ENCODE measurements at regions of chr15 and their contacts with region 1.

Region 1: GRCh38 chr15:31326156-31326732 is 391 bp upstream of the KLF13 start:
- DNase-seq: peak; percentile 99 to 100
- ATAC-seq: peak; percentile 88 to 95 (median 92)
- H3K4me3 ChIP-seq: peak overlapping the region; percentile 71 to 96 (median 92)
- H3K27ac ChIP-seq: peak overlapping the region; percentile 99 to 100 (median 100)
- H3K4me1 ChIP-seq: peaks cover 14 to 53% (median 38%) of the 10 kb centered on the region in 9 donors
- H3K27me3 ChIP-seq: no peaks in the 10 kb centered on the region
- CTCF ChIP-seq: no peak

Region 2: GRCh38 chr15:31200735-31201151 is 125.5 kb before region 1 on chr15:
- intact Hi-C with region 1: loop called in 2 of 10 experiments (anchors 5 kb)
- DNase-seq: peak; percentile 75 to 83
- ATAC-seq: peak; percentile 89 to 97 (median 92)
- H3K4me3 ChIP-seq: no peak overlapping the region
- H3K27ac ChIP-seq: no peak overlapping the region
- H3K4me1 ChIP-seq: peaks cover 0 to 8% (median 0%) of the 10 kb centered on the region in 9 donors
- H3K27me3 ChIP-seq: no peaks in the 10 kb centered on the region
- CTCF ChIP-seq: peak; percentile 27 to 93 (median 69)

Region 3: GRCh38 chr15:31228985-31229826 is 97.0 kb before region 1 on chr15:
- intact Hi-C with region 1: loop called in 1 of 10 experiments (anchors 10 kb)
- DNase-seq: no peak
- ATAC-seq: peak in 6 of 8 donors; percentile 25 to 73 (median 54)
- H3K4me3 ChIP-seq: no peak overlapping the region
- H3K27ac ChIP-seq: no peak overlapping the region
- H3K4me1 ChIP-seq: peaks cover 0 to 19% (median 8%) of the 10 kb centered on the region in 9 donors
- H3K27me3 ChIP-seq: no peaks in the 10 kb centered on the region
- CTCF ChIP-seq: no peak

Region 4: DNA sequence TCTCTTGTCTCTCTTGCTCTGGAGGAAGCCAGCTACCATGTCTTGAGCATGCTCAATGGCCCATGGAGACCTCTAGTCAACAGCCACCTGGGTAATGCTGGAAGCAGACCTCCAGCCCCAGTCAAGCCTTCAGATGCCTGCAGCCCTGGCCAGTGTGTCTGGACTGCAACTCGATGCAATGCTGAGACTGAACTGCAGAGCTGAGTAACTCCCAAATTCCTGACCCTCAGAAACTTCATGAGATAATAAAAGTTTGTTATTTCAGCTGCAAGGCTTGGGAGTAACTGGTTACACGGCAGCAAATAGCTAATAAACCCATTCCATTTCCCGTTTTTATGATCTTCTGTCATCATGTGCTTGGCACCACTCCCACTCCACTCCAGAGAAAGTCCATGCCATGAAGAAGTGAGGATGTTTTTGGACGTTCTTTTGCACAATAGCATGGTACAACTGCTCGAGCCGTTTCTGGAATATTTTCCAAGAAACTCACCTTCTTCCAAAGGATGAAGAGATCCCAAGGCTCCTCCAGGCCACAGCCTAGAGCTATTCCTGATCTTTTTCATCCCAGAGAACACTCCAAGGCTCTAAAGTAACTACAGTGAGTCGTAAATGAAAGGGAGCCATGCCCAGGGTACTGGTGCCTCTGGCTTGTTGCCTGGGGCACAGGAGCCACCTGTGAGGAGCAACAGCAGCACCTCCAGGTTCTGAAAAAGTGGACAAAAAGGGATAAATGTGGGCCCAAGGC is 71.6 kb before region 1 on chr15:
- intact Hi-C with region 1: no loop called
- DNase-seq: peak in 1 of 2 donors; percentile 44
- ATAC-seq: peak in 5 of 8 donors; percentile 58 to 75 (median 69)
- H3K4me3 ChIP-seq: no peak overlapping the region
- H3K27ac ChIP-seq: peak overlapping the region in 1 of 10 donors; percentile 49
- H3K4me1 ChIP-seq: peaks cover 0 to 32% (median 0%) of the 10 kb centered on the region in 9 donors
- H3K27me3 ChIP-seq: no peaks in the 10 kb centered on the region
- CTCF ChIP-seq: peak in 1 of 9 donors; percentile 7

Region 5: GRCh38 chr15:31365655-31366127 is 39.4 kb after region 1 on chr15:
- intact Hi-C with region 1: loop called in 5 of 10 experiments (anchors 2 to 5 kb)
- DNase-seq: peak; percentile 91 to 93
- ATAC-seq: peak; percentile 89 to 93 (median 92)
- H3K4me3 ChIP-seq: peak overlapping the region in 9 of 10 donors; percentile 21 to 39 (median 32)
- H3K27ac ChIP-seq: peak overlapping the region; percentile 78 to 97 (median 93)
- H3K4me1 ChIP-seq: peaks cover 57 to 100% (median 98%) of the 10 kb centered on the region in 9 donors
- H3K27me3 ChIP-seq: no peaks in the 10 kb centered on the region
- CTCF ChIP-seq: peak in 8 of 9 donors; percentile 30 to 62 (median 50)

Region 6: GRCh38 chr15:31396881-31397560 is 70.8 kb after region 1 on chr15:
- intact Hi-C with region 1: loop called (anchors 1 to 10 kb)
- DNase-seq: peak; percentile 94 to 95
- ATAC-seq: peak; percentile 82 to 94 (median 92)
- H3K4me3 ChIP-seq: peak overlapping the region in 4 of 10 donors; percentile 4 to 32 (median 14)
- H3K27ac ChIP-seq: peak overlapping the region; percentile 25 to 88 (median 83)
- H3K4me1 ChIP-seq: peaks cover 13 to 59% (median 32%) of the 10 kb centered on the region in 9 donors
- H3K27me3 ChIP-seq: peaks cover 0 to 11% (median 0%) of the 10 kb centered on the region in 7 donors
- CTCF ChIP-seq: peak in 5 of 9 donors; percentile 36 to 60 (median 51)

Measured in heart right ventricle (tissue), 16 donors.